ENCODE measurements at regions of chr18 and their contacts with region 1.

Region 1: GRCh38 chr18:13159579-13159978 is 59.0 kb upstream of the LDLRAD4 start:
- DNase-seq: peak; percentile 76
- ATAC-seq: peak; percentile 76
- H3K4me3 ChIP-seq: no peak overlapping the region
- H3K27ac ChIP-seq: no peak overlapping the region
- H3K4me1 ChIP-seq: peaks cover 30% of the 10 kb centered on the region
- H3K27me3 ChIP-seq: no peaks in the 10 kb centered on the region; a peak in 1 of 5 replicates
- CTCF ChIP-seq: peak; percentile 79
- EP300 ChIP-seq: no peak
- POLR2A ChIP-seq: no peak
- RAD21 ChIP-seq: peak; percentile 82

Region 2: GRCh38 chr18:13003466-13003896 is 156.1 kb before region 1 on chr18:
- CTCF ChIA-PET with region 1: interaction called, 6 read pairs
- POLR2A ChIA-PET with region 1: no interaction called
- in situ Hi-C with region 1: no loop called
- intact Hi-C with region 1: loop called (anchors 1 kb)
- DNase-seq: peak; percentile 47
- ATAC-seq: peak; percentile 98
- H3K4me3 ChIP-seq: no peak overlapping the region
- H3K27ac ChIP-seq: no peak overlapping the region
- H3K4me1 ChIP-seq: no peaks in the 10 kb centered on the region
- H3K27me3 ChIP-seq: no peaks in the 10 kb centered on the region
- CTCF ChIP-seq: peak; percentile 68
- EP300 ChIP-seq: no peak
- POLR2A ChIP-seq: no peak
- RAD21 ChIP-seq: peak; percentile 14; the same call in 1 of the 2 replicates

Region 3: GRCh38 chr18:13112982-13113381 is 46.6 kb before region 1 on chr18:
- CTCF ChIA-PET with region 1: interaction called, 13 read pairs
- POLR2A ChIA-PET with region 1: interaction called, 4 read pairs
- in situ Hi-C with region 1: no loop called
- intact Hi-C with region 1: loop called (anchors 1 kb)
- DNase-seq: peak; percentile 81
- ATAC-seq: peak; percentile 100
- H3K4me3 ChIP-seq: no peak overlapping the region
- H3K27ac ChIP-seq: no peak overlapping the region
- H3K4me1 ChIP-seq: peaks cover 17% of the 10 kb centered on the region; the same call in 1 of the 2 replicates
- H3K27me3 ChIP-seq: no peaks in the 10 kb centered on the region
- CTCF ChIP-seq: peak; percentile 90
- EP300 ChIP-seq: no peak
- POLR2A ChIP-seq: no peak
- RAD21 ChIP-seq: peak; percentile 81